ENCODE measurements at regions of chr3 and their contacts with region 1.

Region 1: GRCh38 chr3:146065573-146066006 is 95.4 kb downstream of the PLOD2 start:
- DNase-seq: peak; percentile 23
- ATAC-seq: no peak
- H3K4me3 Mint-ChIP-seq: no peak overlapping the region
- H3K27ac Mint-ChIP-seq: no peak overlapping the region
- H3K4me1 Mint-ChIP-seq: no peaks in the 10 kb centered on the region
- H3K27me3 Mint-ChIP-seq: no peaks in the 10 kb centered on the region
- CTCF ChIP-seq: peak; percentile 82

Region 2: DNA sequence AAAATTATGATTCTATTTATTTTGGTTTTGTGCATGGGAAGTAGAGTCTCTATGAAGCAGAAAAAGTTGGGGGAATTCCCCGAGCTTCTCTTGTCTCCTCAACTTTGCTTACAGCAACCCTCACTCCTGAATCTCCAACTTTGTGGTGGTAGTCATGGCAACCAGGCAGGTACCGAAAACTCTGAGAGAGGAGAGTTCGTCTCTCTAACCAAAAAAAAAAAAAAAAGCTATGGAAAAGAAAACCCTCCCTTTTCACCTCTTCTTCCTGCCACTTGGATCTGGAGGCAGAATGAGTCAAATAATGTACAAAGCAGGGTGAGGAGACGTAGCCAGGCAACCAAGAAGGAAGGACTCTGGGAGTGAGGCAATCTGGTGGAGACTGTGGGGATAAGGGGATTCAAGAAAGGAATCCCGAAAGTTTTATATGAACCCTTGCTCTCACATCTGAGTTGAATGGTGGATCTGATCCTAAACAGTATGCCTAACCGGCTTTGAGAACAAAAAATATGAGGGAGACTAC is 12.7 kb before region 1 on chr3:
- CTCF ChIA-PET with region 1: interaction called, 14 read pairs
- POLR2A ChIA-PET with region 1: no interaction called
- intact Hi-C with region 1: no loop called
- DNase-seq: no peak
- ATAC-seq: no peak
- H3K4me3 Mint-ChIP-seq: no peak overlapping the region
- H3K27ac Mint-ChIP-seq: no peak overlapping the region
- H3K4me1 Mint-ChIP-seq: no peaks in the 10 kb centered on the region
- H3K27me3 Mint-ChIP-seq: no peaks in the 10 kb centered on the region
- CTCF ChIP-seq: no peak

Measured in activated CD8-positive, alpha-beta T cell treated with anti-CD3 and anti-CD28 coated beads for 36 hours (primary cell).